Heart left ventricle (tissue), 16 donors: ENCODE measurements at regions of chr20 and their contacts with region 1.

Region 1: DNA sequence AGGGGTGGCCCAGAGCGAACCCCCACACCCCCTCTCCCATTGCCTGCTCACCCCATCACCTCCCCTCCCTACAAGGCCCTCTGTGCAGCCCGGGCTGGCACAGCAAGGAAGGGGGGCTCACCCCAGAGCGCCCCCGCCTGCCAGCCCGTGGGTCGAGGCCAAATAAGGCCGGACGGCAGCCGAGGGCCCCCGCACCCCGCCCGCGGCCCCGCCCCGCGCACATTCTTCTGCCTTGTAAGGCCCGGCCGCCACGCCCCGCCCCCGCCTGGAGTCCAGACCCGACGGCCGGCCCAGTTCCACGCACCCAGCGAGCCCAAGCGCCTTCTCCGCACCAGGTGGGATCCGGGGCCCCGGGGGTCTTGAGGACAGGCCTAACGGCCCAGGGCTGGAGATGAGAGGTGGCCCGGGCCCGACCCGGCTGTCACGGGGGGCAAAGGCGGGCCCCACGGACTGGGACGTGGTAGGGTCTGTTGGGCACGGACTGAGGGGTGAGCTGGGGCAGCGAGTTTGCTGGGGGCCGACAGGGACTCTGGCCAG is at the start of gene MYL9:
- DNase-seq: peak; percentile 95 to 98 (median 96)
- ATAC-seq: peak; percentile 66 to 88 (median 81)
- H3K4me3 ChIP-seq: peak within 1 kb of the TSS; percentile 71 to 100 (median 92)
- H3K27ac ChIP-seq: peak within 1 kb of the TSS; percentile 88 to 100 (median 98)
- H3K4me1 ChIP-seq: peaks cover 5 to 74% (median 52%) of the 10 kb centered on the region in 12 donors
- H3K27me3 ChIP-seq: no peaks in the 10 kb centered on the region
- CTCF ChIP-seq: no peak
- POLR2A ChIP-seq: peak in 1 of 2 donors; percentile 62
- total RNA-seq, gene MYL9: 521 to 2,387 (median 1,751) TPM

Region 2: GRCh38 chr20:36481381-36482043 is 59.8 kb before region 1 on chr20:
- intact Hi-C with region 1: no loop called
- DNase-seq: no peak
- ATAC-seq: no peak
- H3K4me3 ChIP-seq: no peak overlapping the region
- H3K27ac ChIP-seq: peak overlapping the region in 10 of 12 donors; percentile 18 to 85 (median 76)
- H3K4me1 ChIP-seq: peaks cover 5 to 95% (median 87%) of the 10 kb centered on the region in 12 donors
- H3K27me3 ChIP-seq: no peaks in the 10 kb centered on the region
- CTCF ChIP-seq: no peak
- POLR2A ChIP-seq: no peak

Region 3: DNA sequence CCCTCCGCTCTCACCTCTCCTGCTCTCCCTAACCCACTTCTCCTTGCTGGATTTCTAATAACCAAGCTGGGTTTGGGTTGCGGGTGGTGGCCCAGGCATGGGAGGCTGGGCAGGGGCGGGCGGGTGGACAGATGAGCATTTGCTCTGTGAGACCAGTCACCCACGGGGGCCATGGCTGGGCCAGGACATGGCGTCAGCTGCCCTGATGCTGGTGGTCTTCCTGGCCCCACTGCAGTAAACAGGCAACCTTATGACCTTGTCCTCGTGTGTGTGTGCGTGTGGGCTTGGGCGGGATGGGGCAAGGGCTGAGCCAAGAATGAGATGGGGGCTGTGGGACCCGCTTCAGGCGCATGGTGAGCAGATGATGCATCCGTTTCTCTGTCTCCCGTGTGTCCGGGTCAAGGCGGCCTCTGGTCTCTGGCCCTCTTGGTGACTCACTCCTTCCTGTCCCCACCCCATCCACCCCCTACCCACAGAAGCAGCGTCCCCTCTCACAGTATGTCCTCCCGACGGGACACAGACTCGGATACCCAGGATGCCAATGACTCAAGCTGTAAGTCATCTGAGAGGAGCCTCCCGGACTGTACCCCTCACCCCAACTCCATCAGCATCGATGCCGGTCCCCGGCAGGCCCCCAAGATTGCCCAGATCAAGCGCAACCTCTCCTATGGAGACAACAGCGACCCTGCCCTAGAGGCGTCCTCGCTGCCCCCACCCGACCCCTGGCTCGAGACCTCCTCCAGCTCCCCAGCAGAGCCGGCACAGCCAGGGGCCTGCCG is 41.4 kb before region 1 on chr20:
- intact Hi-C with region 1: loop called in 2 of 10 experiments (anchors 5 kb)
- DNase-seq: no peak
- ATAC-seq: no peak
- H3K4me3 ChIP-seq: no peak overlapping the region
- H3K27ac ChIP-seq: peak overlapping the region in 2 of 12 donors; percentile 86 to 91
- H3K4me1 ChIP-seq: peaks cover 0 to 49% (median 20%) of the 10 kb centered on the region in 12 donors
- H3K27me3 ChIP-seq: no peaks in the 10 kb centered on the region
- CTCF ChIP-seq: no peak
- POLR2A ChIP-seq: no peak

Region 4: DNA sequence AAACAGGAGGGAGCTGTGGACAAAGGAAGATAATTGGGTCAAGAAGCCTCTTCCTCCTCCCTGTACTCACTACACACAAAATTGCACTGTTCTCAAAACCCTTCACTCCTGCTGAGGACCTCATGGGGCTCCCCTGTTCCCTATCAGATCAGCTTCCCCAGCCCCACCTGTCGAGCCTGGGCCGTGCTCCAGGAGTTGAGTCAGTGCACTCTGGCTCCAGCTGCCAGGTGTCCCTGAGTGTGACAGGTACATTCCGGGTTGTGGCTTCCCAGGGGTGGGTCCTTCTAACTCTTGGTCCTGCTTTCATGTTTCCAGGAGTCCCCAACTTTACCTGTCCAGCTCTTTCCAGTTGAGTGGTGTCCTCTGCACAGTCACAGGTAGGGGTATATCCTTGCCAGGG is 72.7 kb after region 1 on chr20:
- intact Hi-C with region 1: no loop called
- DNase-seq: no peak
- ATAC-seq: peak in 1 of 4 donors; percentile 14
- H3K4me3 ChIP-seq: no peak overlapping the region
- H3K27ac ChIP-seq: no peak overlapping the region
- H3K4me1 ChIP-seq: no peaks in the 10 kb centered on the region
- H3K27me3 ChIP-seq: no peaks in the 10 kb centered on the region
- CTCF ChIP-seq: no peak
- POLR2A ChIP-seq: no peak